Mammary epithelial cell (primary cell): ENCODE measurements at regions of chr2 and their contacts with region 1.

Region 1: GRCh38 chr2:28870146-28870891 is at the start of gene TRMT61B:
- DNase-seq: peak; percentile 93
- H3K4me3 ChIP-seq: peak within 1 kb of the TSS; percentile 63 to 95 (median 91)
- H3K27ac ChIP-seq: peak within 1 kb of the TSS; percentile 85
- H3K4me1 ChIP-seq: peaks cover 13% of the 10 kb centered on the region
- H3K27me3 ChIP-seq: no peaks in the 10 kb centered on the region
- CTCF ChIP-seq: no peak
- total RNA-seq, gene TRMT61B: 13.7 to 14.7 TPM

Region 2: GRCh38 chr2:28809927-28810326 is 60.4 kb before region 1 on chr2:
- CTCF ChIA-PET with region 1: no interaction called
- dilution Hi-C with region 1: loop called (anchors 10 kb)
- in situ Hi-C with region 1: no loop called
- intact Hi-C with region 1: no loop called
- DNase-seq: no peak
- H3K4me3 ChIP-seq: peak overlapping the region in 2 of 3 experiments; percentile 36 to 55
- H3K27ac ChIP-seq: no peak overlapping the region
- H3K4me1 ChIP-seq: peaks cover 10% of the 10 kb centered on the region
- H3K27me3 ChIP-seq: no peaks in the 10 kb centered on the region
- CTCF ChIP-seq: no peak

Region 3: GRCh38 chr2:28894470-28895177 is 24.3 kb after region 1 on chr2 and contains the start of gene WDR43:
- CTCF ChIA-PET with region 1: no interaction called
- dilution Hi-C with region 1: no loop called
- in situ Hi-C with region 1: no loop called
- intact Hi-C with region 1: loop called (anchors 1 kb)
- DNase-seq: peak; percentile 98
- H3K4me3 ChIP-seq: peak within 1 kb of the TSS; percentile 74 to 99 (median 98)
- H3K27ac ChIP-seq: peak within 1 kb of the TSS; percentile 76
- H3K4me1 ChIP-seq: peaks cover 21% of the 10 kb centered on the region
- H3K27me3 ChIP-seq: no peaks in the 10 kb centered on the region
- CTCF ChIP-seq: no peak
- total RNA-seq, gene WDR43: 106 to 122 TPM